B cell (primary cell): ENCODE measurements at regions of chr5 and their contacts with region 1.

Region 1: DNA sequence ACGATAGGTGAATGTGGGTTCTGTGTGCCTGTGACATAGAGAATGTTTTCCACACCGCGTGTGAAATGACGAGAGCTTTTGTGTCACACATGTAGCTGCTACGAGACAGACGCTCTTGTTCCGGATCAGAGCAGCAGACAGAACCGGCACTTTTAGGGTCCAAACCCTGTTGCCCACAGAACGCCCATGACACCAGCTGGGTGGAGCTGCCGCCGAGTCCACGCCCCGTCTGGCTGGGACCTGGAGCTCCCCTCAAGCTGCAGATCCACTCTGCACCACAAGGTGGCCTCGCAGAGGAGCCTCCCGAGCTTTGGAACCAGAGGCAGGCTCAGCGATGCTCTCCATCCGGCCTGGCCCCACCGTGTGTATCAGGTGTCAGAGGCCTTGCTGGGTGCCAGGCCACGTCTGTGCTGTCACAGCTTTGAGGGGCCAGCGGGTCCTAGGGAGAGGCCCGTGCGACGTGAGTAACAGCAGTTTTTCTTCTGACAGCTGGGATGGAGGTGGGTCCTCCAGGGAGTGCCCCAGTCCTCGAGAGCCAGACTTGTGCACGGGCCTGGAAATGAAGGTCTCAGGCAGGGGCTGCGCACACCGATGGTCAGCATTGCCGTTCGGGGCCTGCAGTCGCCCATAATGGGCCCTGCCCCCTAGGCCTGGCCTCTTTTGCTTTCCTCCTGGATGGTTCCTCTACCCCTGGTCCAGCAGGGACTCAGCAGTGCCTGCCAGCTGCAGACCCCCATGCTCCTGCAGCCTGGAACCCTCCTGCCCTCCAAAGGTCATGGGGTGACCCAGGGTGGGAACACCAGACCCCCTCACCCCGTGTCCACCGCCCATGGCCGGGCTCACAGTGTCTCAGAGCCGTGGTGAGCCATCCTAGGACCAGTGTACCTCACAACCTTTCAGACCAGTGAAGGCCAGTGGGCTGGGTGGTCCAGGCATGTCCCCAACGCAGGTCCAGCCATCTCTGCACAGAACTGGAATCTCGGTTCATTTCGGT is 2.5 kb upstream of the LRRC14B start:
- DNase-seq: peak; percentile 87
- ATAC-seq: peak; percentile 96
- H3K4me3 ChIP-seq: no peak overlapping the region
- H3K4me3 Mint-ChIP-seq: peak overlapping the region; percentile 56
- H3K27ac ChIP-seq: no peak overlapping the region
- H3K27ac Mint-ChIP-seq: peak overlapping the region; percentile 26
- H3K4me1 ChIP-seq: peaks cover 16 to 19% of the 10 kb centered on the region in 2 donors
- H3K4me1 Mint-ChIP-seq: peaks cover 21% of the 10 kb centered on the region
- H3K27me3 ChIP-seq: peaks cover 0 to 29% (median 2%) of the 10 kb centered on the region in 4 experiments
- H3K27me3 Mint-ChIP-seq: peaks cover 16% of the 10 kb centered on the region
- CTCF ChIP-seq: peak; percentile 92

Region 2: DNA sequence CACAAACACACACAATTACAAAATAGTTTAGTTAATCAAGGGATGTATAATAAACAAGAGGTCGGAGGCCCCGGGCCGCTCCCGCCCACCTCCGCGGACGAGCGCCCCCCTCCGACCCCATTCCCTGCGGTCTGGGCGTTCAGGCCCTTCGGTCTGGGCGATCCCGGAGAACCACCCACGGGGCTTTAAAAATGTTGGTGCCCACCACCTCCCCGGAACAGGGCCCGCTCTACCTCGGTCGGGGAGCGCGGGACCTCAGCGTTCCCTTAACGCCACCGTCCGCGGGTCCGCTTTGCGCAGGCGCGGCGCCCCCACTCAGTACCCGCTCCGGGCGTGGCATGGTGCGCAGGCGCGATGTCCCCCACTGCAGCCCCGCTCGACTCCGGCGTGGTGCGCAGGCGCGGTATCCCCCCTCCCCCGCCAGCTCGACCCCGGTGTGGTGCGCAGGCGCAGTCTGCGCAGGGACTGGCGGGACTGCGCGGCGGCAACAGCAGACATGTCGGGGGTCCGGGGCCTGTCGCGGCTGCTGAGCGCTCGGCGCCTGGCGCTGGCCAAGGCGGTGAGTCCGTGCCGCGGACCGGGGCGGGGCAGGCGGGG is 29.2 kb after region 1 on chr5 and contains the starts of genes CCDC127 and SDHA:
- CTCF ChIA-PET with region 1: interaction called, 19 read pairs
- POLR2A ChIA-PET with region 1: no interaction called
- intact Hi-C with region 1: loop called (anchors 1 kb)
- DNase-seq: peak; percentile 99
- ATAC-seq: peak; percentile 85
- H3K4me3 ChIP-seq: peak within 1 kb of the TSS; percentile 67 to 93 (median 90)
- H3K4me3 Mint-ChIP-seq: peak within 1 kb of the TSS; percentile 96
- H3K27ac ChIP-seq: peak within 1 kb of the TSS; percentile 68 to 83
- H3K27ac Mint-ChIP-seq: peak within 1 kb of the TSS; percentile 94
- H3K4me1 ChIP-seq: peaks cover 6 to 23% of the 10 kb centered on the region in 2 donors
- H3K4me1 Mint-ChIP-seq: peaks cover 62% of the 10 kb centered on the region
- H3K27me3 ChIP-seq: no peaks in the 10 kb centered on the region
- H3K27me3 Mint-ChIP-seq: no peaks in the 10 kb centered on the region
- CTCF ChIP-seq: peak; percentile 20
- total RNA-seq, gene CCDC127: 7.8 and 8.7 TPM in 2 replicates
- total RNA-seq, gene SDHA: 137 and 143 TPM in 2 replicates

Region 3: DNA sequence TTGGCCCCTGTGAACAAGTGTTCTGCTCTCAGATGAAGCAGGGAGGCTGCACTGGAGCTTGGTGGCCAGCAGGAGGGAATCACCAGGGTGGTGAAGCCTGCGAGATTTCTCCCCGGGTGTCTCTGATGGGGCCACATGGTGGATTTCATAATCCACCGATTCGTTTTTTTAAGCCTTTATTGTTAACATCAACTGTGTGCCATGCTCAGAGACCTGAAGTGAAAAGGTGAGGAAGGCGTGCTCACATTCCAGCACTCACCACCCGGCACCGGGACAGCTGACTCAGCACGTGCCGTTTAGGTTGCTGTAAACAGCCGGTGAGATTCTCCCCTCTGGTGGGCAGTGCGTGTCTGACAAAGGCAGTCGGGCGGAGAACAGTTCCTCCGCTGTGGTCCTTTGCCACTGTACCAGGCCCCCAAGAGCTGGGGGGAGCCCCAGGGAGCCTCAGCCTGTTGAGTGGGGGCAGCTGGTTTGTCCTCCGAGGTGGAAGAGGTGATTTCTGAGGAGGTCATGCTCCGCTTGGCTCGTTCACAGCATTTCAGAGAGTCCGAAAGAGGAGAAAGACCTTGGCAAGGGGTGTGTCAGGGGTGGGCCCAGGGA is 120.0 kb after region 1 on chr5:
- CTCF ChIA-PET with region 1: no interaction called
- POLR2A ChIA-PET with region 1: no interaction called
- intact Hi-C with region 1: no loop called
- DNase-seq: no peak
- ATAC-seq: no peak
- H3K4me3 ChIP-seq: no peak overlapping the region
- H3K4me3 Mint-ChIP-seq: no peak overlapping the region
- H3K27ac ChIP-seq: no peak overlapping the region
- H3K27ac Mint-ChIP-seq: no peak overlapping the region
- H3K4me1 ChIP-seq: no peaks in the 10 kb centered on the region
- H3K4me1 Mint-ChIP-seq: no peaks in the 10 kb centered on the region
- H3K27me3 ChIP-seq: no peaks in the 10 kb centered on the region
- H3K27me3 Mint-ChIP-seq: no peaks in the 10 kb centered on the region
- CTCF ChIP-seq: no peak

Region 4: GRCh38 chr5:424301-425110 is 235.7 kb after region 1 on chr5:
- CTCF ChIA-PET with region 1: interaction called, 18 read pairs
- POLR2A ChIA-PET with region 1: no interaction called
- intact Hi-C with region 1: no loop called
- DNase-seq: no peak
- ATAC-seq: peak; percentile 17
- H3K4me3 ChIP-seq: peak overlapping the region in 1 of 5 experiments; percentile 2
- H3K4me3 Mint-ChIP-seq: no peak overlapping the region
- H3K27ac ChIP-seq: no peak overlapping the region
- H3K27ac Mint-ChIP-seq: no peak overlapping the region
- H3K4me1 ChIP-seq: peaks cover 5 to 12% of the 10 kb centered on the region in 2 donors
- H3K4me1 Mint-ChIP-seq: peaks cover 14% of the 10 kb centered on the region
- H3K27me3 ChIP-seq: peaks cover 0 to 3% (median 0%) of the 10 kb centered on the region in 4 experiments
- H3K27me3 Mint-ChIP-seq: no peaks in the 10 kb centered on the region
- CTCF ChIP-seq: no peak

Region 5: DNA sequence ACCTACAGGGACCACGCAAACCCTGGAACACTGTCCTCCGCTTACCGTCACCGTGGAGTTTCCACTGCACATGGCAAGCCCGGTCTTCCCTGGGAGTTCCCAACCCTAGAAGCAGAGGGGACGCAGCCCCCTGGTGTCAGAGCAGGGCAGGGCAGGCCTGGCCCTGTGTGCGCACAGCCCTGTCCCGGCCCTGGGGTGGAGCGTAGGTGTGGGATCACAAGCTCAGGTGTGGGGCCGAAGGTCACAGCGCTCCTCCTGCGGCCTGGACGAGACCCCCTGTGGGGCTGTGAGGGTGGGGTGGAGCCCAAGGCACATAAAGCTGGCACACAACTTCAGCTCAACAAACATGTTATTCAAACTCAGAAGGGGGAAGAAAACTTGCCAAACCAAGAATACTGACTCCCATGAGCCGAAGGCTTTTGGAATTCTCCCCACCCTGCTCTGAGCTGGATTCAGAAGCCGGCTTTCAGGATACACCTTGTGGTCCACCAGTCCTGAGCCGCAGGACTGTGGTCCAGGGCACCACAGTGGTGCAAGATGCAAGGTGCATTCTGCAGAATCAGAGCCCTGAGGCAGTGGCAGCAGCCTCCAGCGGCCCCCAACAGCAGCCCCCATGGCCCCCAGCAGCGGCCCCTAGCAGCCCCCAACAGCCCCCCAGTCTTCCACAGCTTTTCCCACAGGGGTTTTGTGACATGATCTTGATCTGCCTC is 242.4 kb after region 1 on chr5:
- CTCF ChIA-PET with region 1: interaction called, 18 read pairs
- POLR2A ChIA-PET with region 1: no interaction called
- intact Hi-C with region 1: loop called (anchors 1 kb)
- DNase-seq: peak; percentile 46
- ATAC-seq: peak; percentile 88
- H3K4me3 ChIP-seq: no peak overlapping the region
- H3K4me3 Mint-ChIP-seq: no peak overlapping the region
- H3K27ac ChIP-seq: no peak overlapping the region
- H3K27ac Mint-ChIP-seq: no peak overlapping the region
- H3K4me1 ChIP-seq: no peaks in the 10 kb centered on the region
- H3K4me1 Mint-ChIP-seq: no peaks in the 10 kb centered on the region
- H3K27me3 ChIP-seq: peaks cover 0 to 10% (median 2%) of the 10 kb centered on the region in 4 experiments
- H3K27me3 Mint-ChIP-seq: peaks cover 12% of the 10 kb centered on the region
- CTCF ChIP-seq: peak; percentile 67